ENCODE measurements at regions of chrX and their contacts with region 1.

Region 1: DNA sequence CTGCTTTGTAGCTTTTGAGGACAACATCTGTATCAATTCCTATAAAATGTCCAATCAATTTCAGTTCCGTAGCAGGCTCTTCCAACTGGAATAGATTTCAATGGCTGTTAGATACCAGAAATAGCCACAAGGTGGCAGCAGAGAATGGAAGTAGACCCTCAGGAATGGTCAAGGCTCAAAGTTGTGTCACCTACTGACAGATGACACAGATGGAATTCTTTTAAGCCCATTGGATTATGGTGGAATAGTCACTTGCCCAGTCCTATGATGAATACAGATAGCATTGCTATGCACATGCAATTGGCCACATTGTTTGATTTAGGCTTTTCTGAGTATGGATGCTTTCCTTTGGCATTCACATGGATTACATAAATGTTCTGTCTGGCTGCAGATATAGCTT is 130.4 kb upstream of the RADX start:
- DNase-seq: peak; percentile 36 to 69
- H3K4me3 ChIP-seq: no peak overlapping the region
- H3K4me3 Mint-ChIP-seq: no peak overlapping the region
- H3K27ac Mint-ChIP-seq: no peak overlapping the region
- H3K4me1 ChIP-seq: no peaks in the 10 kb centered on the region
- H3K4me1 Mint-ChIP-seq: no peaks in the 10 kb centered on the region
- H3K27me3 ChIP-seq: no peaks in the 10 kb centered on the region
- H3K27me3 Mint-ChIP-seq: no peaks in the 10 kb centered on the region
- CTCF ChIP-seq: peak; percentile 51 to 53

Region 2: DNA sequence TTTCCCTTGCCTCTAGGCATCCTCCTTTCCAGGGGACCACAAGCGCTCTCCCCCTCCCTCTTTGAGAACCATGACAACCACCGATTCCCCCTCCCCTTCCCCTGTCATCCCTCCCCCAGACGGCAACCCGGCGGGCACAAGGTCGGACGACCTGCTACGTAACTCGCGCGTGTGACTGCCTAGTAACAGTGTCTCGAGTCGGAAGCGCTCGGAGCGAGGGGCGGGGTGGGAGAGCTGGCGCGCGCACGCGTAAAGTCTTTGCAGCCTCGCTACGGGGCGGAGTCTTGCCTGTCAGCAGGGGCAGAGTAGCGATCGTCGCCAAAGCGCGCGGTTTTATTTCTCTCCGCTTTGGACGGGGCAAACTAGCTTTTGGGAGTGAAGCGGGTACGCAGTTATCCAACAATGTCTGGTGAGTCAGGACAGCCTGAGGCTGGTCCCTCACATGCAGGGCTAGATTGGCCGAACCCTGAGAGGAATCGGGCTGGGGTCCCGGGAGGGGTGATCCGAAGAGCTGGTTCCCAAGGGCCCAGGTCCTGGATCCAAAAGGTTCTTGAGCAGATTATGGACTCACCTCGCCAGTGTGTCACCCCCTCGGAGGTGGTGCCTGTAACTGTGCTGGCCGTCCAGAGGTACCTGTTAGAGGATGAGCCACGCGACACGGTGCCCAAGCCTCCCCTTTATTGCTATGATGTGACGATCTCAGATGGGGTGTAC is 130.5 kb after region 1 on chrX and contains the start of gene RADX:
- CTCF ChIA-PET with region 1: no interaction called
- POLR2A ChIA-PET with region 1: no interaction called
- intact Hi-C with region 1: loop called (anchors 1 kb)
- DNase-seq: peak; percentile 77 to 81
- H3K4me3 ChIP-seq: peak within 1 kb of the TSS; percentile 50
- H3K4me3 Mint-ChIP-seq: peak within 1 kb of the TSS; percentile 82
- H3K27ac Mint-ChIP-seq: peak within 1 kb of the TSS; percentile 36
- H3K4me1 ChIP-seq: no peaks in the 10 kb centered on the region
- H3K4me1 Mint-ChIP-seq: peaks cover 6% of the 10 kb centered on the region
- H3K27me3 ChIP-seq: no peaks in the 10 kb centered on the region
- H3K27me3 Mint-ChIP-seq: no peaks in the 10 kb centered on the region
- CTCF ChIP-seq: no peak
- total RNA-seq, gene RADX: 2.2 and 3.4 TPM in 2 replicates

Region 3: DNA sequence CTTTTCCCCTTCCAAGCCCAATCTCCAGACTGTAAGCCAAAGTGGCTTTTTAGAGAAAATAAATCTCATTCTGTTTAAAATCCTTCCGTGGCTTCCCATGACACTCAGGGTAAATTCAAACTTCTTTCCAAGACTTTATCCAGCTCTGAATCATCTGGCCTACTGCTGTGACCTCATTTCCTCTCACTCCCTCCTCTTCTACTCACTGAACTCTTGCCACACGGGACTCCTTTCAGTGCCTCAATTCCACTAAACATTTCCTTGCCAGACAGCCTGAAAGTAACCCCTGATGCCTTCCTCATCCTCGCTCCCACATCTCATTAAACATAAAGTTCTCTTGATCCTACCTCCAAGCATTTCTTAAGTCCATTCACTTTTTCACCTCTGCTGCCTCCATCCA is 217.4 kb after region 1 on chrX:
- CTCF ChIA-PET with region 1: no interaction called
- POLR2A ChIA-PET with region 1: no interaction called
- intact Hi-C with region 1: loop called (anchors 10 kb)
- DNase-seq: no peak
- H3K4me3 ChIP-seq: no peak overlapping the region
- H3K4me3 Mint-ChIP-seq: no peak overlapping the region
- H3K27ac Mint-ChIP-seq: no peak overlapping the region
- H3K4me1 ChIP-seq: no peaks in the 10 kb centered on the region
- H3K4me1 Mint-ChIP-seq: peaks cover 38% of the 10 kb centered on the region
- H3K27me3 ChIP-seq: no peaks in the 10 kb centered on the region
- H3K27me3 Mint-ChIP-seq: no peaks in the 10 kb centered on the region
- CTCF ChIP-seq: no peak

Region 4: DNA sequence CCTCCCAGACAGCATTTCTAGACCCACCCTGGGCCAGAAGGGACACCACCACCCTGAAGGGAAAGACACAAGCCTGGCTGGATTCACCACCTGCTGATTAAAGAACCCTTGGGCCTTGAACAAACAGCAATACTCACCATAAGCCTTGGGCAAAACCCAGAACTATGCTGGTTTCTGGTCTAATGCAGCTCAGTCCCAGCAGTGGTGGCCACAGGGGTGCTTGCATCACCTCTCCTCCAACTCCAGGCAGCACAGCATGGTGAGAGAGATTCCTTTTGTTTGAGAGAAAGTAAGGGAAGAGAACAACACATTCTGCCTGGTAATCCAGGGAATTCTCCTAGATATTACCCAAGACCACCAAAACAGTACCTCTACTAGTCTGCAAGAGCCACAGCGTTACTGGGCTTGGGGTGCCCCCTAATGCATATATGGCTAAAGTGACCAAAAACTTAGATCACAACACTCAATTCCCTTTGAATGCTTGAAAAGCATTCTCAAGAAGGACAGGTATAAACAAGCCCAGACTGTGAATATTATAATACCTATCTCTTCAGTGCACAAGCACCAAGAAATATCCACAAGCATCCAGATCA is 270.8 kb after region 1 on chrX:
- CTCF ChIA-PET with region 1: no interaction called
- POLR2A ChIA-PET with region 1: no interaction called
- intact Hi-C with region 1: loop called (anchors 10 kb)
- DNase-seq: peak in 1 of 2 experiments; percentile 11
- H3K4me3 ChIP-seq: no peak overlapping the region
- H3K4me3 Mint-ChIP-seq: no peak overlapping the region
- H3K27ac Mint-ChIP-seq: no peak overlapping the region
- H3K4me1 ChIP-seq: no peaks in the 10 kb centered on the region
- H3K4me1 Mint-ChIP-seq: no peaks in the 10 kb centered on the region
- H3K27me3 ChIP-seq: no peaks in the 10 kb centered on the region
- H3K27me3 Mint-ChIP-seq: no peaks in the 10 kb centered on the region
- CTCF ChIP-seq: no peak

Region 5: GRCh38 chrX:106791495-106791894 is 310.2 kb after region 1 on chrX:
- CTCF ChIA-PET with region 1: no interaction called
- POLR2A ChIA-PET with region 1: no interaction called
- intact Hi-C with region 1: loop called (anchors 10 kb)
- DNase-seq: no peak
- H3K4me3 ChIP-seq: no peak overlapping the region
- H3K4me3 Mint-ChIP-seq: no peak overlapping the region
- H3K27ac Mint-ChIP-seq: no peak overlapping the region
- H3K4me1 ChIP-seq: no peaks in the 10 kb centered on the region
- H3K4me1 Mint-ChIP-seq: no peaks in the 10 kb centered on the region
- H3K27me3 ChIP-seq: no peaks in the 10 kb centered on the region
- H3K27me3 Mint-ChIP-seq: no peaks in the 10 kb centered on the region
- CTCF ChIP-seq: peak in 1 of 2 experiments; percentile 31

Region 6: GRCh38 chrX:106863697-106864096 is 382.4 kb after region 1 on chrX:
- CTCF ChIA-PET with region 1: interaction called, 13 read pairs
- POLR2A ChIA-PET with region 1: no interaction called
- intact Hi-C with region 1: no loop called
- DNase-seq: peak in 1 of 2 experiments; percentile 17
- H3K4me3 ChIP-seq: no peak overlapping the region
- H3K4me3 Mint-ChIP-seq: no peak overlapping the region
- H3K27ac Mint-ChIP-seq: no peak overlapping the region
- H3K4me1 ChIP-seq: no peaks in the 10 kb centered on the region
- H3K4me1 Mint-ChIP-seq: no peaks in the 10 kb centered on the region
- H3K27me3 ChIP-seq: no peaks in the 10 kb centered on the region
- H3K27me3 Mint-ChIP-seq: no peaks in the 10 kb centered on the region
- CTCF ChIP-seq: no peak

Region 7: GRCh38 chrX:106874075-106874474 is 392.7 kb after region 1 on chrX:
- CTCF ChIA-PET with region 1: no interaction called
- POLR2A ChIA-PET with region 1: no interaction called
- intact Hi-C with region 1: loop called (anchors 10 kb)
- DNase-seq: no peak
- H3K4me3 ChIP-seq: no peak overlapping the region
- H3K4me3 Mint-ChIP-seq: no peak overlapping the region
- H3K27ac Mint-ChIP-seq: no peak overlapping the region
- H3K4me1 ChIP-seq: no peaks in the 10 kb centered on the region
- H3K4me1 Mint-ChIP-seq: no peaks in the 10 kb centered on the region
- H3K27me3 ChIP-seq: no peaks in the 10 kb centered on the region
- H3K27me3 Mint-ChIP-seq: no peaks in the 10 kb centered on the region
- CTCF ChIP-seq: peak in 1 of 2 experiments; percentile 31